Panc1 (cell line): ENCODE measurements at regions of chr5 and their contacts with region 1.

Region 1: GRCh38 chr5:90434116-90434714 is 24.7 kb upstream of the CETN3 start:
- DNase-seq: no peak
- ATAC-seq: peak; percentile 84
- H3K4me3 ChIP-seq: no peak overlapping the region
- H3K27ac ChIP-seq: no peak overlapping the region
- H3K4me1 ChIP-seq: no peaks in the 10 kb centered on the region
- H3K27me3 ChIP-seq: peaks cover 8% of the 10 kb centered on the region
- CTCF ChIP-seq: peak; percentile 83

Region 2: GRCh38 chr5:90421136-90421535 is 13.1 kb before region 1 on chr5:
- CTCF ChIA-PET with region 1: no interaction called
- POLR2A ChIA-PET with region 1: no interaction called
- in situ Hi-C with region 1: no loop called
- intact Hi-C with region 1: no loop called
- DNase-seq: no peak
- ATAC-seq: peak; percentile 90
- H3K4me3 ChIP-seq: no peak overlapping the region
- H3K27ac ChIP-seq: no peak overlapping the region
- H3K4me1 ChIP-seq: no peaks in the 10 kb centered on the region
- H3K27me3 ChIP-seq: no peaks in the 10 kb centered on the region
- CTCF ChIP-seq: peak; percentile 62

Region 3: GRCh38 chr5:90529939-90530677 is 95.9 kb after region 1 on chr5:
- CTCF ChIA-PET with region 1: interaction called, 8 read pairs
- POLR2A ChIA-PET with region 1: no interaction called
- in situ Hi-C with region 1: no loop called
- intact Hi-C with region 1: loop called (anchors 2 kb)
- DNase-seq: peak; percentile 73
- ATAC-seq: peak; percentile 87
- H3K4me3 ChIP-seq: peak overlapping the region; percentile 98 to 99
- H3K27ac ChIP-seq: peak overlapping the region; percentile 86
- H3K4me1 ChIP-seq: peaks cover 14% of the 10 kb centered on the region
- H3K27me3 ChIP-seq: peaks cover 28% of the 10 kb centered on the region
- CTCF ChIP-seq: peak; percentile 85

Region 4: GRCh38 chr5:90606539-90606938 is 172.3 kb after region 1 on chr5:
- CTCF ChIA-PET with region 1: no interaction called
- POLR2A ChIA-PET with region 1: no interaction called
- in situ Hi-C with region 1: no loop called
- intact Hi-C with region 1: loop called (anchors 10 kb)
- DNase-seq: no peak
- ATAC-seq: no peak
- H3K4me3 ChIP-seq: no peak overlapping the region
- H3K27ac ChIP-seq: no peak overlapping the region
- H3K4me1 ChIP-seq: no peaks in the 10 kb centered on the region
- H3K27me3 ChIP-seq: peaks cover 3% of the 10 kb centered on the region
- CTCF ChIP-seq: peak; percentile 35; the same call in 1 of the 2 replicates

Region 5: DNA sequence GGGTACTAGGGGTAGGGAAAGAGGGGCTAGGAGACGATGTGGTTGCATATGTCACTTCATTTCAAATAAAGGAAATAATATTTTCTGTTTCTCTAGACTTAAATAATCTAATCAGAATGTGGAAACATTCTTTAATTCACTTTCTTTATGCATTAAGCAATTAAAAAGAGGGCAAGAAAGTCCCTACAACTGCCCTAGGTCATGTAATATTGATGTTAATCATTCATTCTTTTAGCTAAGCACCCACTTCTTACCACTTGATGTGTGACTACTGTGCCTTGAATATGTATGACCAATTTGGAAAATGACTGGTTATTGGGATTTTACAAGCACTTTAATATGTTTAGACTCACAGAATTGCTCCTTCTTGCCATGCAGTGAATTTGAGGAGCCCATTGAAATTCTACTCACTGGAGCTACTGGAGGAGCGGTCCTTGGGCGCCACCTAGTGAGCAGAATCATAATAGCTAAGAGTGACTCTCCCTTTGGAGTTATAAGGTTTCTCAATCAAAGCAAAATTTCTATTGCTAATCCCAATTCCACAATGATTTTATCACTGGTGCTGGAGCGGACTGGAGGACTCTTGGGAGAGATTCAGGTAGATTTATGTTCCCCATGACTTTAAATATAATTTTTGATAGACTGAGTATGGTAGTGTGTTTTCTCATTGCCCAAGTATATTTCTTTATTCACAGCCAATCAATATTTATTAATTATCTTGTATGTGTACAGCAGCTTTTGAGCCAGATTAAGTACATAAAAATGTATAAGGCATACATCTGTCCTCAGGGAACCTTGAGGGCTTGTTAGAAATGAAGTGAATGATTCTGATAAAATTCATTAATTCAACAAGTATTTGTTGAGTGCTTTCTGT is 349.5 kb after region 1 on chr5:
- CTCF ChIA-PET with region 1: interaction called, 3 read pairs
- POLR2A ChIA-PET with region 1: no interaction called
- in situ Hi-C with region 1: no loop called
- intact Hi-C with region 1: loop called (anchors 2 kb)
- DNase-seq: peak; percentile 43
- ATAC-seq: peak; percentile 99
- H3K4me3 ChIP-seq: no peak overlapping the region
- H3K27ac ChIP-seq: no peak overlapping the region
- H3K4me1 ChIP-seq: no peaks in the 10 kb centered on the region
- H3K27me3 ChIP-seq: peaks cover 9% of the 10 kb centered on the region
- CTCF ChIP-seq: peak; percentile 92